Sigmoid colon (tissue), 7 donors: ENCODE measurements at regions of chr2 and their contacts with region 1.

Region 1: GRCh38 chr2:67322353-67323001 is 74.7 kb upstream of the ETAA1 start:
- DNase-seq: peak; percentile 81
- H3K4me3 ChIP-seq: no peak overlapping the region
- H3K27ac ChIP-seq: peak overlapping the region; percentile 7 to 77 (median 73)
- H3K4me1 ChIP-seq: peaks cover 0 to 65% (median 51%) of the 10 kb centered on the region in 4 donors
- H3K27me3 ChIP-seq: no peaks in the 10 kb centered on the region
- CTCF ChIP-seq: peak; percentile 31 to 51 (median 38)
- EP300 ChIP-seq: no peak
- POLR2A ChIP-seq: no peak

Region 2: DNA sequence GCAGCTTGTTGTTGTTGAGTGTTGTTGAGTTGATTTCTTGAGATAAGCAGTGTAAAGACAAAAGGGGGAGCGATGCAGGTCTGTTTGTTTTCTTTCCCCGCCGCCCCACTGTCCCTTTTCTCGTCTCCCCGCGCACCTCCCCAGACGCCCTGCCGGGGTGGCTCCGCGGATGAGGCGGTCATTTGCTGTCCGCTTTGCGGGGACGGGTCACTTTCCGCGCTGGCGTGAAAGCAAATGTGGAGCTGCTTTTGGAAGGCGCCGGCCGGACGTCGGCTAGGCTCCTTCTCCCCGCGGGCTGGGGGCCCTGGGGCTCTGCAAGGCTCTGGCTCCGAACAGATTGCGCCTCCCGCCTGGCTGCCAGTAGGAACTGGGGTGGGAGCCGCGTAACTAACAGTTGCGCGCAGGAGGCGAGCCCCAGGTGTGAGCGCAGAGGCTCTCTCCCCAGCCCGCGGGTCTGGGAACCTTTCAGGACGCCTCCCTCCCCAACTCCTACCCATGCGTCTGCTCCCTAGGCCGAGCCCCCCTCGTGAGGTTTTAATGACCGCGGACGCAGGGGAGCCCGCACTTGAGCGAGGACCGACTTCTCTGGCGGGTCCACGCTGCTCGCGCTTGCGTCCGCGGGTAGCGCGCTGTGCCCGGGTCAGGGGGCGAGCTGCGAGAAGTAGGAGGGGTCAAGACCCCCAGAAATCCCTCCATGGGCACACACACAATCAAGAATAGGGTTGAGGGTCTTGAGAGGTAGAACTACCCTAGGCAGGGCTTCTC is 741.0 kb before region 1 on chr2:
- intact Hi-C with region 1: loop called (anchors 2 kb)
- DNase-seq: peak; percentile 89
- H3K4me3 ChIP-seq: peak overlapping the region; percentile 43 to 73 (median 57)
- H3K27ac ChIP-seq: peak overlapping the region; percentile 95 to 99 (median 98)
- H3K4me1 ChIP-seq: peaks cover 0 to 35% (median 22%) of the 10 kb centered on the region in 4 donors
- H3K27me3 ChIP-seq: peaks cover 0 to 3% (median 3%) of the 10 kb centered on the region in 3 donors
- CTCF ChIP-seq: no peak
- EP300 ChIP-seq: no peak
- POLR2A ChIP-seq: peak; percentile 25 to 39

Region 3: DNA sequence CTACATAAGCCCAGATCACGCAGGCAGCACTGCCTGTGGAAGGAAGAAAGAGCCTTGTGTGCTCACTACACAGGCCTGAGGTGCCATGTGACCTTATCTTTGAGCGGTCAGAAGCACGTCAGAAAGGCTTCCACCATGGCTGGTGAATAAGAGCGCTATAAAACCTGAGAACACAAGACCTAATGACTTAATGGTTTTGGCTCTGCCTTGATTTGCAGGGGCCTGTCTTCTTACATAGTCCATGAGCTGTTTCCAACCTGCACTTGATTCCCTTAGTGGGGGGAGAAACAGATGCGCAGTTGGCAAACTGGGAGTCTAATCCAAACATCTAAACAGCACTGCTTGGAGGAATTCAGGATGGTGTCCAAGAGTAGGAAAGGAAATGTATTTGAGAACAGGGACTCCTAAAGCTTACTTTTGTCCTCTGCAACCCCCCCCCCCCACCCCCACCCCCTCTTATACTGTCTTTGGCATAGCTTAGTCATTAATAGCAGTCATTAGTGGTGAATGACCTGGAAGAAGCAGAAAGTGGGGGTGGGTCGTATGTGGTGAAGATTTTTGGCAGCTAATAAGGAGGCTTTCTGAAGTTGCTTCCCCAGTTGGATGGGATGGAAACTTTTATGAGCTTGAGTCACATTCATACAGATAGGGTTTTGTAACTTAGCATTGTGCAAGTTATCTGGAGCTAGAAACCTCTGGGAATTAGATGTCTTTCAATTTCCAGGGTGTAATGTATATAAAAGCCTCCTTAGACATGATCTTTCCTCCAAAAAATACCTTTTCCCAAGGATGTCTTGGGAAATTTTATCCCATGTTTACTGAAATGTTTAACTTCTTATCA is 433.5 kb before region 1 on chr2:
- intact Hi-C with region 1: loop called (anchors 5 kb)
- DNase-seq: peak; percentile 95
- H3K4me3 ChIP-seq: no peak overlapping the region
- H3K27ac ChIP-seq: peak overlapping the region; percentile 27 to 91 (median 83)
- H3K4me1 ChIP-seq: peaks cover 0 to 68% (median 45%) of the 10 kb centered on the region in 4 donors
- H3K27me3 ChIP-seq: no peaks in the 10 kb centered on the region
- CTCF ChIP-seq: no peak
- EP300 ChIP-seq: peak; percentile 97 to 98 (median 98)
- POLR2A ChIP-seq: peak in 1 of 2 donors; percentile 4

Region 4: DNA sequence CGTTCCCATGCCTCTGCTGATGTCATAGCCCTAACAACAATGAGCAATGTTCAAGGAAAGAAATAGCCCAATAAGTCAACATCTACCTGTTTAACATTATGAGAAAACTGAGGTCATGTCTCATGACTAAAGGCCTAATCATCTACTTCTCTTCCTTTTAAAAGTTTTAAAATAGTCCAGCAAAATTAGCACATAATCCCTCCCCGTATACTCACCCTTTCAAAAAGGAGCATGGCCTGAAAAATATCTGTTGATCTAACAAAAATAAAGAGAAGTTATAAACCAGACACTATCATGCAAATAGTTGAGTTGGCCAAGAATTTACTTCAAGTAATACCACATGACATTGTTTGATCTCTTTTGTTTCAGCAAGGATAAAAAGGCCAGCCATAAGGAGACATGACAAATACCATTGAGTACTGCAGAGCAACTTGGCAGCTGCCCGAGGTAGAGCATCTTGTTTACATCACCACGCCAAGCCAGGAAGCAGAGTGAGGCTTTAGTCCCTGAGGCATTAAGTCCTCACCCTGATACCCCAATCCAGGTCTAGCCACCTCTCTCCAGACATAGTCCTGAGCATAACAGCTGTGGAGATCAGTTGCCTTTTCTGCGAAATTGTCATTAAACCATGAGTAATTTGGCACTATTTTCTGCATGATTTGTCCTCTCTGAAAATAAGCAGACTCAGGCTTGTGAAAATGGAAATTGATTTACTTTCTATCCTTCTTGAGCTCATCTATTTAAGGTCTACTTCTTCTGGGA is 62.7 kb before region 1 on chr2:
- intact Hi-C with region 1: loop called (anchors 5 kb)
- DNase-seq: peak; percentile 94
- H3K4me3 ChIP-seq: no peak overlapping the region
- H3K27ac ChIP-seq: peak overlapping the region; percentile 84 to 89 (median 86)
- H3K4me1 ChIP-seq: peaks cover 0 to 28% (median 19%) of the 10 kb centered on the region in 4 donors
- H3K27me3 ChIP-seq: no peaks in the 10 kb centered on the region
- CTCF ChIP-seq: no peak
- EP300 ChIP-seq: peak; percentile 51 to 86 (median 62)
- POLR2A ChIP-seq: no peak

Region 5: GRCh38 chr2:67840460-67841068 is 518.1 kb after region 1 on chr2:
- intact Hi-C with region 1: loop called (anchors 10 kb)
- DNase-seq: peak; percentile 85
- H3K4me3 ChIP-seq: no peak overlapping the region
- H3K27ac ChIP-seq: peak overlapping the region in 1 of 4 donors; percentile 29
- H3K4me1 ChIP-seq: peaks cover 0 to 18% (median 1%) of the 10 kb centered on the region in 4 donors
- H3K27me3 ChIP-seq: no peaks in the 10 kb centered on the region
- CTCF ChIP-seq: peak; percentile 59 to 84 (median 79)
- EP300 ChIP-seq: no peak
- POLR2A ChIP-seq: no peak